ENCODE measurements at regions of chr5 and their contacts with region 1.

Region 1: GRCh38 chr5:157464519-157465171 is 4.6 kb downstream of the NIPAL4 start:
- DNase-seq: peak; percentile 86
- H3K4me3 Mint-ChIP-seq: peak overlapping the region; percentile 2
- H3K27ac Mint-ChIP-seq: peak overlapping the region; percentile 90
- H3K4me1 Mint-ChIP-seq: peaks cover 34% of the 10 kb centered on the region
- H3K27me3 Mint-ChIP-seq: peaks cover 15% of the 10 kb centered on the region

Region 2: DNA sequence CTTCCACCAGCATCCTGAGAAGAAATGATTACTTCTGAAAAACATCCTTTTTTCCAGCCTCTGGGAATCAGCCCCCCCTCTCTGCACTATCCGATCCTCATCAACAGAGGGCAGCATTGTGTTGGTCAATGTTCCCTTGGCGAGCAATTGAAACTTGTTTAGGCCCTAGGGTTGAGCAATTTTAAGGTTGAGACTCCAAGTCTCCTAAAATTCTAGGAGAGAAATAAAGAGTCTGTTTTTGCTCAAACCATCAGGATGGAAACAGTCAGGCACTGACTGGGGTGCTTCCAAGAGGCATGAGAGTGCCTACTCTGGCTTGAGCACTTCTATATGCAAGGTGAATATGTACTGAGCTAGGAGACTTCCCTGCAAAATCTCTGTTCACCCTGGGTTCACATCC is 211.1 kb before region 1 on chr5:
- CTCF ChIA-PET with region 1: no interaction called
- POLR2A ChIA-PET with region 1: no interaction called
- intact Hi-C with region 1: loop called (anchors 2 kb)
- DNase-seq: no peak
- H3K4me3 Mint-ChIP-seq: peak overlapping the region; percentile 39
- H3K27ac Mint-ChIP-seq: peak overlapping the region; percentile 96
- H3K4me1 Mint-ChIP-seq: peaks cover 92% of the 10 kb centered on the region
- H3K27me3 Mint-ChIP-seq: no peaks in the 10 kb centered on the region

Region 3: DNA sequence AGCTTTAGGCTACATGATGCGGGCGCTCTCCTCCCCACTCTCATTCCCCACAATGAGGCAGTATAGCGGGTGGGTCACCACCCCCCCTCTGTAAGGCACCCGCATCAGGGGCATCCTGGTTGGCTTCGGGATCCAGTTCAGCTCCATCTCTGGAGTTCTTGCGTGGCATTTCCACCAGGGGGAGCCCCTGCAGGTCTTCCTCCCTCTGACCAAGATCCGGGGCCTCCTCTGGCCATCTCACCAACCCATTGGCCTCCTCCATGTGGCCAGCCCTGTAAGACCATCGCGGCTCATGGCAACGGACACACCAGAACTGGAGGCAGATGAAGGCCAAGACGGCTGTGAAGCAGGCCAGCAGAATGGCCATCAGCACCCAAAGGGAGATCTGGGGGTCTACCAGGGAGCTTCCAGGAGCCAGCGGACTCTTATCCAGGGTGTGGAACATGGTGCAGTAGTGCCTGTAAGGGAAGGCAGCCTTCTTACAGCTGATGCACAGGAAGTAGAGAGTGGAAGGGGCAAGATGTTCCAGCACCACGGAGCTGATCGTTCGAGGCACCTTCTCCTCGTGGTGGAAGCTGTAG is 121.7 kb before region 1 on chr5:
- CTCF ChIA-PET with region 1: interaction called, 39 read pairs
- POLR2A ChIA-PET with region 1: no interaction called
- intact Hi-C with region 1: no loop called
- DNase-seq: peak; percentile 52
- H3K4me3 Mint-ChIP-seq: no peak overlapping the region
- H3K27ac Mint-ChIP-seq: peak overlapping the region; percentile 91
- H3K4me1 Mint-ChIP-seq: peaks cover 39% of the 10 kb centered on the region
- H3K27me3 Mint-ChIP-seq: no peaks in the 10 kb centered on the region

Region 4: DNA sequence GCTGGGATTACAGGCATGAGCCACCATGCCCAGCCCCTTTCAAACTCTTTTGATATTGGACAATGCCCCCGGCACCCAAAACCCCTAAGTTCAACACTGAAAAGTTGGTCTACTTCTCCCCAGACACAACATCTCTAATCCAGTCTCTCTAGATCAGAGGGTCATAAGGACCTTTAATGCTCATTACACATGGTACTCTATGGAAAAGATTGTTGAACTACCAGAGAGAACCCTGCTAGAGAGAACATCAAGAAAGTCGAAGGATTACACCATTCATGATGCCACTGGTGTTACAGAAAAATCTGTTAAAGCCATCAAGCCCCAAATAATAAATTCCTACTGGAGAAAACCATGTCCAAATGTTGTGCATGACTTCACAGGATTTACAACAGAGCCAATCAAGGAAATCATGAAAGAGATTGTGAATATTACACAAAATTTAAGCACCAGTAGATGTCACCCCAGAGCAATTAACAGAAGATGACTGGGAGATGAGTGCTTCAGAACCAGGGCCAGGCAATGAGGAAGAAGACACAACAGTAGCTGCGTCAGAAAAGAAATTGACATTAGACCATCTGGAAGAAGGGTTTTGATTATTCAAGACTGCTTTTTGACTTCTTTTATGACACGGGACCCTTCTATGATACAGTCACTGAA is 33.0 kb before region 1 on chr5:
- CTCF ChIA-PET with region 1: interaction called, 128 read pairs
- POLR2A ChIA-PET with region 1: no interaction called
- intact Hi-C with region 1: loop called (anchors 2 kb)
- DNase-seq: peak; percentile 30
- H3K4me3 Mint-ChIP-seq: no peak overlapping the region
- H3K27ac Mint-ChIP-seq: no peak overlapping the region
- H3K4me1 Mint-ChIP-seq: peaks cover 8% of the 10 kb centered on the region
- H3K27me3 Mint-ChIP-seq: peaks cover 1% of the 10 kb centered on the region

Region 5: DNA sequence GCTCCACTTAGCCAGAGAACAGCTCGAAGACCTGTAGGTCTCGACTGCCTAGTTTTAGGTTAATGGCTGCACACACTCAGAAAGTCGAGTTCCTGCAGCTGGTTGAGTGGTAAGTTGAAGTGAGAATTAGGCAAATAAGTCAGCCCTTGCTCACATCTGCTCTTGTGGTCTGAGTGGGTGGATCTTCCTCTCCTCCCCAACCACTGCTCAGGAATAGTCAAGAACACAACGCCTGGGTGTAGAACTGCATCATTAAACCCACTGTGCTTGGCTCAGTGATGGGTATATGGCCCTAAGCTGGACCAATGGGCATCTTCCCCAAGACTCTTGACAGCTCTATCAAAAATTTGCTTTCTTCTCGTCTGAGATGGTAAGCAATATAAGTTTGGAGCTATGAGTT is 131.8 kb after region 1 on chr5:
- CTCF ChIA-PET with region 1: no interaction called
- POLR2A ChIA-PET with region 1: interaction called, 4 read pairs
- intact Hi-C with region 1: loop called (anchors 1 kb)
- DNase-seq: peak; percentile 83
- H3K4me3 Mint-ChIP-seq: peak overlapping the region; percentile 11
- H3K27ac Mint-ChIP-seq: peak overlapping the region; percentile 91
- H3K4me1 Mint-ChIP-seq: peaks cover 95% of the 10 kb centered on the region
- H3K27me3 Mint-ChIP-seq: no peaks in the 10 kb centered on the region

Region 6: GRCh38 chr5:157718519-157718918 is 253.9 kb after region 1 on chr5:
- CTCF ChIA-PET with region 1: interaction called, 4 read pairs
- POLR2A ChIA-PET with region 1: interaction called, 3 read pairs
- intact Hi-C with region 1: loop called (anchors 1 kb)
- DNase-seq: no peak
- H3K4me3 Mint-ChIP-seq: no peak overlapping the region
- H3K27ac Mint-ChIP-seq: no peak overlapping the region
- H3K4me1 Mint-ChIP-seq: peaks cover 21% of the 10 kb centered on the region
- H3K27me3 Mint-ChIP-seq: no peaks in the 10 kb centered on the region

Region 7: DNA sequence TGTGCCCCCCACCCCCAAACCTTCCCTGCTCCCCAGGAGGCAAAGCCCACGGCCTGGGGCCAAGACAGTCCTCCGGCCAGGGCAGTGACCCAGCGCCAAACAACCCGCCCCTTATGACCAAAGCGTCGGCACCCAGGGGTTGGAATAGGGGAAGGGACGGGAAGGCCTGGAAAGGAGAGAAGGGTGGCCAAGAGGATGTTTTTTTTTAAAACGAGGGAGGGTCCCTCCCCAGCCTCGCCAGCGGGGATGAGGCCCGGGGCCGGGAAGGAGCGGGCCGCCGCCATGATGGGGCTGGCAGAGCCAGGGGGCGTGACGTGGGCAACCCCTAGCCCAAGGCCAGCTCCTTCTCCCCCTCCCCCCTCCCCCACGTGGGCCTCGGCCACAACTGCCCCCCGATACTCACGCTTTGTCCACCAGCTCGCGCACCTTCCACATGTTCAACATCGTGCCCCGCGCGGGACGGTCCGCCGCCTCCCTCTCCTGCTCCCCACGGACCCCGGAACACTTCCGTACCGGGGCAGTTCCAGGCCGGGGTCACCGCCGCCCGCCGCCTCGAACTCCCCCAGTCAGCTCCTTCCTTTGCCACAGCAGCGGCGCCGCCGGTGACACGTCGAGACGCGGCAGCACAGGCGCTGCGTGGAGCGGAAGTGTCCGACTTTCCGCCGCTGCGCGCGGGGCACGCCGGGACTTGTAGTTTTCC is 394.0 kb after region 1 on chr5 and contains the start of gene CLINT1:
- CTCF ChIA-PET with region 1: no interaction called
- POLR2A ChIA-PET with region 1: no interaction called
- intact Hi-C with region 1: loop called (anchors 1 kb)
- DNase-seq: peak; percentile 92
- H3K4me3 Mint-ChIP-seq: peak within 1 kb of the TSS; percentile 91
- H3K27ac Mint-ChIP-seq: peak within 1 kb of the TSS; percentile 96
- H3K4me1 Mint-ChIP-seq: peaks cover 73% of the 10 kb centered on the region
- H3K27me3 Mint-ChIP-seq: no peaks in the 10 kb centered on the region
- total RNA-seq, gene CLINT1: 48.7 to 49.4 TPM